Activated CD4-positive, alpha-beta T cell treated with anti-CD3 and anti-CD28 coated beads for 36 hours (primary cell): ENCODE measurements at regions of chr12 and their contacts with region 1.

Region 1: DNA sequence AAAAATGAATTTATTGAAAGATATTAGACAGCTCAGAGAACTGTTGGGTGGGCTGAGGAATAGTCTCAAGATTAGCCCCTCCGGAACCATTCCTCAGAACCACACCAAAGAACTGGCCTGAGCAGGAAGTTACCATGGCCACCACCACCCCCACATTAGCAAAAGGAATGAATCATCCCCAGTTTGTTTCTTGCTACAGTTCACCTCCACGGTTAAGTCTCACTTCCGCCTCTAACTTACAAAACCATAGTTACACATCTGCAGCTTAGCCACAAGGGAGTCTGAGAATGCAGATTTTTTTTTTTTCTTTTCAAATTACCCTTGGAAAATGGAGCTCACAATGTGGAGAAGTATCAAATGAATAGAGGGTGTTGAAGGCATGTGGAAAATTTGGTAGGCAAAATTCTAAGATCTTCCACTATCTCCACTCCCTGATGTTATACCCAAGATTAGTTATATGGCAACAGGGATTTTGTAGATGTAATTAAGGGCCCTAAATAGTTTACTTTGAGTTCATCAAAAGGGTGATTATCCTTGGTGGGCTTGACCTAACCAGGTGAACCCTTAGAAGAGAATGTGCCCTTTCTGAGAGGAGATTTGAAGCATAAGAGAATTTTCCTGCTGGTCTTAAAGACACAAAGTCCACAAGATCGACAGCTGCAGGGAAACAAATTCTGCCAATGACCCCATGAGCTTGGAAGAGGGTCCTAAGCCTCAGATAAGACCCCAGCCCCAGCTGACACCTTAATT is 129.8 kb upstream of the KRR1 start:
- DNase-seq: peak; percentile 65
- ATAC-seq: peak; percentile 93
- H3K4me3 Mint-ChIP-seq: no peak overlapping the region
- H3K27ac Mint-ChIP-seq: peak overlapping the region; percentile 34
- H3K4me1 Mint-ChIP-seq: peaks cover 19% of the 10 kb centered on the region
- H3K27me3 Mint-ChIP-seq: peaks cover 11% of the 10 kb centered on the region

Region 2: DNA sequence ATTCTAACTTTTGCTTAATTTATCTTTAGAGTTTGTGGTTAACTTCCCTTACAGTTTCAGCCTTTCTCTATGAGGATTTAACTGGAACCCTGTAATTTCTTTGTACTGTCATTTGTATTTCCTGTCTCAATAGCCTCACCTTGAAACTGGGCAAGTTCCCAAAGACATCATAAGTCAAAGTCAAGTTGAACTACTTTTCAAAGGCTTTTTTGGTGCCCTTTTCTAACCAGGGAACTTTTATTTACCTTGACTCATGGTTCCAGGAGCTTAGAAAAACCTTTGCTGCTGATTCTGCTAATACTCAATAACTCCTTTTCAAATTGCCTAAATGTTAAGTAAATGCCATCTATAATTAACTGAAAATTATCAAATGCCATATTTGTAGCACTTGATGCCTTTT is 71.0 kb after region 1 on chr12:
- CTCF ChIA-PET with region 1: no interaction called
- POLR2A ChIA-PET with region 1: no interaction called
- intact Hi-C with region 1: loop called in 1 of 2 experiments (anchors 5 kb)
- DNase-seq: no peak
- ATAC-seq: peak; percentile 16
- H3K4me3 Mint-ChIP-seq: no peak overlapping the region
- H3K27ac Mint-ChIP-seq: no peak overlapping the region
- H3K4me1 Mint-ChIP-seq: peaks cover 11% of the 10 kb centered on the region
- H3K27me3 Mint-ChIP-seq: peaks cover 9% of the 10 kb centered on the region

Region 3: GRCh38 chr12:75738486-75738885 is 97.3 kb after region 1 on chr12:
- CTCF ChIA-PET with region 1: no interaction called
- POLR2A ChIA-PET with region 1: no interaction called
- intact Hi-C with region 1: loop called in 1 of 2 experiments (anchors 2 kb)
- DNase-seq: peak; percentile 59
- ATAC-seq: peak; percentile 95
- H3K4me3 Mint-ChIP-seq: no peak overlapping the region
- H3K27ac Mint-ChIP-seq: no peak overlapping the region
- H3K4me1 Mint-ChIP-seq: peaks cover 16% of the 10 kb centered on the region
- H3K27me3 Mint-ChIP-seq: peaks cover 14% of the 10 kb centered on the region

Region 4: GRCh38 chr12:75977952-75978671 is 336.9 kb after region 1 on chr12:
- CTCF ChIA-PET with region 1: no interaction called
- POLR2A ChIA-PET with region 1: no interaction called
- intact Hi-C with region 1: loop called in 1 of 2 experiments (anchors 5 kb)
- DNase-seq: peak; percentile 85
- ATAC-seq: peak; percentile 80
- H3K4me3 Mint-ChIP-seq: peak overlapping the region; percentile 59
- H3K27ac Mint-ChIP-seq: peak overlapping the region; percentile 100
- H3K4me1 Mint-ChIP-seq: peaks cover 69% of the 10 kb centered on the region
- H3K27me3 Mint-ChIP-seq: no peaks in the 10 kb centered on the region

Region 5: GRCh38 chr12:76020731-76021672 is 379.8 kb after region 1 on chr12:
- CTCF ChIA-PET with region 1: no interaction called
- POLR2A ChIA-PET with region 1: no interaction called
- intact Hi-C with region 1: loop called in 1 of 2 experiments (anchors 1 kb)
- DNase-seq: peak; percentile 88
- ATAC-seq: peak; percentile 79
- H3K4me3 Mint-ChIP-seq: peak overlapping the region; percentile 54
- H3K27ac Mint-ChIP-seq: peak overlapping the region; percentile 99
- H3K4me1 Mint-ChIP-seq: peaks cover 56% of the 10 kb centered on the region
- H3K27me3 Mint-ChIP-seq: peaks cover 1% of the 10 kb centered on the region